ENCODE measurements at regions of chr4 and their contacts with region 1.

Region 1: GRCh38 chr4:71009890-71010588 is 16.6 kb downstream of the DCK start:
- DNase-seq: no peak
- ATAC-seq: peak; percentile 27
- H3K4me3 Mint-ChIP-seq: peak overlapping the region; percentile 21
- H3K27ac Mint-ChIP-seq: peak overlapping the region; percentile 61
- H3K4me1 Mint-ChIP-seq: peaks cover 44% of the 10 kb centered on the region
- H3K27me3 Mint-ChIP-seq: no peaks in the 10 kb centered on the region

Region 2: GRCh38 chr4:70601422-70602039 is 408.5 kb before region 1 on chr4:
- CTCF ChIA-PET with region 1: no interaction called
- POLR2A ChIA-PET with region 1: no interaction called
- intact Hi-C with region 1: loop called in 1 of 2 experiments (anchors 5 kb)
- DNase-seq: peak; percentile 79
- ATAC-seq: peak; percentile 92
- H3K4me3 Mint-ChIP-seq: no peak overlapping the region
- H3K27ac Mint-ChIP-seq: no peak overlapping the region
- H3K4me1 Mint-ChIP-seq: no peaks in the 10 kb centered on the region
- H3K27me3 Mint-ChIP-seq: peaks cover 2% of the 10 kb centered on the region

Region 3: GRCh38 chr4:70839589-70840093 is 170.4 kb before region 1 on chr4 and contains the start of gene GRSF1:
- CTCF ChIA-PET with region 1: interaction called, 3 read pairs
- POLR2A ChIA-PET with region 1: interaction called, 4 read pairs
- intact Hi-C with region 1: loop called (anchors 2 to 5 kb)
- DNase-seq: peak; percentile 98
- ATAC-seq: peak; percentile 87
- H3K4me3 Mint-ChIP-seq: peak within 1 kb of the TSS; percentile 94
- H3K27ac Mint-ChIP-seq: peak within 1 kb of the TSS; percentile 95
- H3K4me1 Mint-ChIP-seq: peaks cover 53% of the 10 kb centered on the region
- H3K27me3 Mint-ChIP-seq: no peaks in the 10 kb centered on the region
- total RNA-seq, gene GRSF1: 96.8 to 115 TPM

Region 4: GRCh38 chr4:70993181-70994068 is 16.6 kb before region 1 on chr4 and contains the start of gene DCK:
- CTCF ChIA-PET with region 1: interaction called, 67 read pairs
- POLR2A ChIA-PET with region 1: interaction called, 13 read pairs
- intact Hi-C with region 1: loop called (anchors 1 kb)
- DNase-seq: peak; percentile 91
- ATAC-seq: peak; percentile 86
- H3K4me3 Mint-ChIP-seq: peak within 1 kb of the TSS; percentile 96
- H3K27ac Mint-ChIP-seq: peak within 1 kb of the TSS; percentile 92
- H3K4me1 Mint-ChIP-seq: peaks cover 39% of the 10 kb centered on the region
- H3K27me3 Mint-ChIP-seq: no peaks in the 10 kb centered on the region
- total RNA-seq, gene DCK: 29.2 to 34.4 TPM

Region 5: GRCh38 chr4:71026086-71026485 is 16.0 kb after region 1 on chr4:
- CTCF ChIA-PET with region 1: interaction called, 17 read pairs
- POLR2A ChIA-PET with region 1: no interaction called
- intact Hi-C with region 1: no loop called
- DNase-seq: no peak
- ATAC-seq: no peak
- H3K4me3 Mint-ChIP-seq: no peak overlapping the region
- H3K27ac Mint-ChIP-seq: no peak overlapping the region
- H3K4me1 Mint-ChIP-seq: peaks cover 2% of the 10 kb centered on the region
- H3K27me3 Mint-ChIP-seq: no peaks in the 10 kb centered on the region

Region 6: GRCh38 chr4:71441186-71442169 is 431.4 kb after region 1 on chr4:
- CTCF ChIA-PET with region 1: no interaction called
- POLR2A ChIA-PET with region 1: no interaction called
- intact Hi-C with region 1: no loop called
- DNase-seq: no peak
- ATAC-seq: no peak
- H3K4me3 Mint-ChIP-seq: no peak overlapping the region
- H3K27ac Mint-ChIP-seq: no peak overlapping the region
- H3K4me1 Mint-ChIP-seq: no peaks in the 10 kb centered on the region
- H3K27me3 Mint-ChIP-seq: peaks cover 4% of the 10 kb centered on the region